CD4-positive, alpha-beta T cell (primary cell): ENCODE measurements at regions of chr1 and their contacts with region 1.

Region 1: GRCh38 chr1:52424231-52424636 is 19.8 kb downstream of the PRPF38A start:
- DNase-seq: peak in 12 of 14 experiments; percentile 11 to 82 (median 26)
- ATAC-seq: peak; percentile 88
- H3K4me3 ChIP-seq: peak overlapping the region; percentile 28
- H3K4me3 Mint-ChIP-seq: peak overlapping the region; percentile 53
- H3K27ac ChIP-seq: peak overlapping the region; percentile 78 to 81
- H3K27ac Mint-ChIP-seq: peak overlapping the region; percentile 100
- H3K4me1 ChIP-seq: peaks cover 21% of the 10 kb centered on the region
- H3K4me1 Mint-ChIP-seq: peaks cover 58% of the 10 kb centered on the region
- H3K27me3 ChIP-seq: no peaks in the 10 kb centered on the region
- H3K27me3 Mint-ChIP-seq: no peaks in the 10 kb centered on the region
- CTCF ChIP-seq: no peak

Region 2: DNA sequence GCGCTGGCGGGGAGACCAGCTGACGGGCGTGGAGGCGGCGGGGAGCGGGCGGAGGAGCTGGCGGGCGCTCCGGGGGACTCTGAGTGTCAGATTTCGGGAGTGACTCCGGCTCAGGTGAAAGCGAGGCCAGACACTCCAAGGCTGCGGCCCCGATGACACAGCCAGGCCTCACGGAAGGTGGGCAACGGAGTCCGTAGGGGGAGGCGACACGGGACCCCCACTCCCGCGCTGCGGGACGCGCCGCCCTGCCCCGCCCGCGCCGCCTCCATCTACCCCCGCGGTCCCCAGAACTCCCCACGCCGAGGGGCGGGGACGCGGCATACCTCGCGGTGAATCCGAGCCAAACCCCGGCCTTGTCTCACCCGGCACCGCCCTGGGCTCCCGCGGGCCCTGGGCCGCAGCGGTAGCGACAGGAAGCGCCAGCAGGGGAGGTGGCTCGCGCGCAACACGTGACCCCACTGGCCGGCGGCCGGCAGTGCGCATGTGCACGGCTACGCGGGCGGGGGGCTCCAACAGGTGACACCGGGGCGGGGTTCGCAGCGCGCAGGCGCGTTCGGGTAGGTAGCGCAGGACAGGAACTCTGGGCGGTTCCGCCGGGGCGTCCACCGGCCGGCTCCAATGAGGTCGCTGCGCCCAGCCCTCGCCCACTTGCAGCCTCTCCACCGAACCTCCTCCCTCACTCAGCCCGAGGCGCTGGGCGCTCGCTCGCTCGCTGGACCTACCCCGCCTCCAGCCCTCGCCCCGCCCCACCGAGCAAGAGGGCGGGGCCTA is 58.3 kb before region 1 on chr1 and contains the start of gene CC2D1B:
- CTCF ChIA-PET with region 1: interaction called, 3 read pairs
- POLR2A ChIA-PET with region 1: interaction called, 12 read pairs
- intact Hi-C with region 1: loop called in 1 of 2 experiments (anchors 5 kb)
- DNase-seq: peak; percentile 97 to 100 (median 99)
- ATAC-seq: peak; percentile 79
- H3K4me3 ChIP-seq: peak within 1 kb of the TSS; percentile 76
- H3K4me3 Mint-ChIP-seq: peak within 1 kb of the TSS; percentile 94
- H3K27ac ChIP-seq: peak within 1 kb of the TSS; percentile 77 to 89
- H3K27ac Mint-ChIP-seq: peak within 1 kb of the TSS; percentile 96
- H3K4me1 ChIP-seq: peaks cover 50% of the 10 kb centered on the region
- H3K4me1 Mint-ChIP-seq: peaks cover 60% of the 10 kb centered on the region
- H3K27me3 ChIP-seq: no peaks in the 10 kb centered on the region
- H3K27me3 Mint-ChIP-seq: no peaks in the 10 kb centered on the region
- CTCF ChIP-seq: no peak
- total RNA-seq, gene CC2D1B: 46.5 to 47.5 TPM

Region 3: GRCh38 chr1:52482326-52483004 is 58.2 kb after region 1 on chr1:
- CTCF ChIA-PET with region 1: no interaction called
- POLR2A ChIA-PET with region 1: interaction called, 3 read pairs
- intact Hi-C with region 1: loop called in 1 of 2 experiments (anchors 10 kb)
- DNase-seq: no peak
- ATAC-seq: no peak
- H3K4me3 ChIP-seq: no peak overlapping the region
- H3K4me3 Mint-ChIP-seq: no peak overlapping the region
- H3K27ac ChIP-seq: no peak overlapping the region
- H3K27ac Mint-ChIP-seq: no peak overlapping the region
- H3K4me1 ChIP-seq: no peaks in the 10 kb centered on the region
- H3K4me1 Mint-ChIP-seq: no peaks in the 10 kb centered on the region
- H3K27me3 ChIP-seq: no peaks in the 10 kb centered on the region
- H3K27me3 Mint-ChIP-seq: no peaks in the 10 kb centered on the region
- CTCF ChIP-seq: no peak